Activated T-helper 2 cell treated with anti-CD3 and anti-CD28 coated beads, Interferon-gamma antibody, Interleukin-2, Interleukin-4, amounts not matched to agents 10 μg/mL and 5 μg/mL and 100 μg/mL, durations not matched to agents 14 hours and 24 hours and 36 hours (primary cell): ENCODE measurements at regions of chr7 and their contacts with region 1.

Region 1: GRCh38 chr7:4797858-4798705 is 22.7 kb downstream of the AP5Z1 start:
- DNase-seq: peak; percentile 54
- H3K4me3 Mint-ChIP-seq: no peak overlapping the region
- H3K27ac Mint-ChIP-seq: no peak overlapping the region
- H3K4me1 Mint-ChIP-seq: peaks cover 2% of the 10 kb centered on the region
- H3K27me3 Mint-ChIP-seq: no peaks in the 10 kb centered on the region

Region 2: GRCh38 chr7:4883374-4884144 is 85.5 kb after region 1 on chr7 and contains the start of gene RADIL:
- intact Hi-C with region 1: loop called (anchors 5 kb)
- DNase-seq: peak; percentile 84
- H3K4me3 Mint-ChIP-seq: peak within 1 kb of the TSS; percentile 51
- H3K27ac Mint-ChIP-seq: no peak within 1 kb of the TSS
- H3K4me1 Mint-ChIP-seq: peaks cover 4% of the 10 kb centered on the region
- H3K27me3 Mint-ChIP-seq: peaks cover 17% of the 10 kb centered on the region
- total RNA-seq, gene RADIL: 0.16 and 0.78 TPM in 2 replicates

Region 3: GRCh38 chr7:5083311-5083711 is 285.2 kb after region 1 on chr7:
- intact Hi-C with region 1: loop called (anchors 1 kb)
- DNase-seq: no peak
- H3K4me3 Mint-ChIP-seq: no peak overlapping the region
- H3K27ac Mint-ChIP-seq: no peak overlapping the region
- H3K4me1 Mint-ChIP-seq: no peaks in the 10 kb centered on the region
- H3K27me3 Mint-ChIP-seq: no peaks in the 10 kb centered on the region

Region 4: GRCh38 chr7:5278766-5279165 is 480.7 kb after region 1 on chr7:
- intact Hi-C with region 1: no loop called
- DNase-seq: no peak
- H3K4me3 Mint-ChIP-seq: no peak overlapping the region
- H3K27ac Mint-ChIP-seq: no peak overlapping the region
- H3K4me1 Mint-ChIP-seq: no peaks in the 10 kb centered on the region
- H3K27me3 Mint-ChIP-seq: peaks cover 9% of the 10 kb centered on the region